K562 (cell line): ENCODE measurements at regions of chr12 and their contacts with region 1.

Region 1: DNA sequence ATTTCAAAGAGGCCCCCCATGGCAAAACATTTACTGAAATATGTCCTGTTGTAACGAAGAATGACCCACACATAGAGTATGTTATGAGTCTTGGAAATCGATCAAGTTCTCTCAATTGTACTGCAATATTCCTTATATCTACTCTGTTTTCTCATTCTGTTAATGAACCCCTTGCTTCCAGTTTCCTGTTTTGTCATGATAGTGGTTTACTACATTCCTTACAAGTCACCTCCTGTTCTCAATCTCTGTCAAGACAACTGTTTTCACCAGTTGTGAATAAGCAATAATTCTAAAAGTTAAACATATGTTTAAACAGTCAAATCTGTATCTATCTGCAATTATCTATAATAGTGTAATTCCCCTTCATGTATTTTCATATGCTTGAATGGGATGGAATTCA is 16.4 kb upstream of the ARID2 start:
- DNase-seq: no peak
- ATAC-seq: no peak
- H3K4me3 ChIP-seq: no peak overlapping the region
- H3K27ac ChIP-seq: no peak overlapping the region
- H3K4me1 ChIP-seq: no peaks in the 10 kb centered on the region
- H3K27me3 ChIP-seq: no peaks in the 10 kb centered on the region
- CTCF ChIP-seq: no peak
- EP300 ChIP-seq: no peak
- POLR2A ChIP-seq: no peak
- RAD21 ChIP-seq: no peak

Region 2: GRCh38 chr12:45670346-45671065 is 42.6 kb before region 1 on chr12:
- CTCF ChIA-PET with region 1: no interaction called
- POLR2A ChIA-PET with region 1: no interaction called
- in situ Hi-C with region 1: loop called (anchors 5 kb)
- intact Hi-C with region 1: no loop called
- DNase-seq: no peak
- ATAC-seq: no peak
- H3K4me3 ChIP-seq: no peak overlapping the region
- H3K27ac ChIP-seq: no peak overlapping the region
- H3K4me1 ChIP-seq: no peaks in the 10 kb centered on the region; a peak in 1 of 5 replicates
- H3K27me3 ChIP-seq: no peaks in the 10 kb centered on the region; a peak in 1 of 5 replicates
- CTCF ChIP-seq: no peak
- EP300 ChIP-seq: no peak
- POLR2A ChIP-seq: no peak
- RAD21 ChIP-seq: no peak